ENCODE measurements at regions of chr15 and their contacts with region 1.

Region 1: DNA sequence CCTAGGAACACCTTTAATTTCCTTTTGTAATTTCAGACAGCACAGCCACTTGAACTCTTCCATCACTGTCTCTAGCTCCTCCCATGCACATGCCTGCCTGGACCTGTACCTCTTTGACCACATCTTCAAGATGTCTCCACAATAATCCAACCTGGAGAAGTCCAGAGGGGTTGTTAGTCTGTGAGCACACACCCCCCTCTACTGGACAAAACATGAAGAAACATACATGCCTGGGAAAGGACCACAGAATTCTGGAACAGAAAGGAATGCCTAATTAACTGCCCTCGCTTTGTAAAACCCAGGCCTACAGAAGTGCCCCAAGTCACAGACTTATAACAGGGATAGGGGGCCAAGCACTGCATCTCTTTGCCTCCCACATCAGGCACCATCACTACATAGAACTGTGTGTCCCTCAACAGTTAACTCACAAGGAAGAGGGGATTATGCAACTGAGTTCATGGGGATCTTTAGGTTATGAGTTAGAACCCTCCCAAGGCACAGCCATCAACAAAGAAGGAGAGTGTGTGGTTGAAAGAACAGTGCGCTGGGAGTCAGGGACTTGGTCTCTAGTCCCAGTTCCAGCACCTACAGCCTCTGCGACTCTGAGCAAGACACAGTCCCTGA is 61.7 kb downstream of the FMN1 start:
- DNase-seq: no peak
- H3K4me3 ChIP-seq: no peak overlapping the region
- CTCF ChIP-seq: peak; percentile 61

Region 2: GRCh38 chr15:33013827-33014445 is 118.9 kb before region 1 on chr15:
- CTCF ChIA-PET with region 1: interaction called, 76 read pairs
- POLR2A ChIA-PET with region 1: no interaction called
- DNase-seq: no peak
- H3K4me3 ChIP-seq: no peak overlapping the region
- CTCF ChIP-seq: no peak

Region 3: GRCh38 chr15:33031324-33031821 is 101.5 kb before region 1 on chr15:
- CTCF ChIA-PET with region 1: interaction called, 14 read pairs
- POLR2A ChIA-PET with region 1: no interaction called
- DNase-seq: no peak
- H3K4me3 ChIP-seq: no peak overlapping the region
- CTCF ChIP-seq: no peak

Region 4: GRCh38 chr15:33074942-33075341 is 57.9 kb before region 1 on chr15:
- CTCF ChIA-PET with region 1: interaction called, 813 read pairs
- POLR2A ChIA-PET with region 1: no interaction called
- DNase-seq: no peak
- H3K4me3 ChIP-seq: no peak overlapping the region
- CTCF ChIP-seq: no peak

Region 5: DNA sequence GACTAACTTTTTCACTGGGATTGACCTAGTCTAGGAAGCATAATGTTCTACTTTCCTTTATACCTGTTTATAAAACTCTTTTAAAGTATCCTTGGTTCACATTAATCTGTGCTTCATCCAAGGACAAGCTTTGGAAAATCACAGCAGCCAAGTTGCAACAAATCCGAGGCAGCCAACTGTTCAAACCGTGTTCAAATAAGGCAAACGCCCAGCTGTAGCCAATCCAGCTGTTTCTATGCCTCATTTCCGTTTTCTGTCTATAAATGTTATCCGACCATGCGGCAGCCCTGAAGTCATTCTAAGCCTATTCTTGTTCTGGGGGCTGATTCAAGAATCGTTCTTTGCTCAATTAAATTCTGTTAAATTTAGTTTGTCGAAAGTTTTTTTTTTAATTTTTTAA is 16.6 kb before region 1 on chr15:
- CTCF ChIA-PET with region 1: interaction called, 813 read pairs
- POLR2A ChIA-PET with region 1: no interaction called
- DNase-seq: no peak
- H3K4me3 ChIP-seq: no peak overlapping the region
- CTCF ChIP-seq: no peak

Region 6: DNA sequence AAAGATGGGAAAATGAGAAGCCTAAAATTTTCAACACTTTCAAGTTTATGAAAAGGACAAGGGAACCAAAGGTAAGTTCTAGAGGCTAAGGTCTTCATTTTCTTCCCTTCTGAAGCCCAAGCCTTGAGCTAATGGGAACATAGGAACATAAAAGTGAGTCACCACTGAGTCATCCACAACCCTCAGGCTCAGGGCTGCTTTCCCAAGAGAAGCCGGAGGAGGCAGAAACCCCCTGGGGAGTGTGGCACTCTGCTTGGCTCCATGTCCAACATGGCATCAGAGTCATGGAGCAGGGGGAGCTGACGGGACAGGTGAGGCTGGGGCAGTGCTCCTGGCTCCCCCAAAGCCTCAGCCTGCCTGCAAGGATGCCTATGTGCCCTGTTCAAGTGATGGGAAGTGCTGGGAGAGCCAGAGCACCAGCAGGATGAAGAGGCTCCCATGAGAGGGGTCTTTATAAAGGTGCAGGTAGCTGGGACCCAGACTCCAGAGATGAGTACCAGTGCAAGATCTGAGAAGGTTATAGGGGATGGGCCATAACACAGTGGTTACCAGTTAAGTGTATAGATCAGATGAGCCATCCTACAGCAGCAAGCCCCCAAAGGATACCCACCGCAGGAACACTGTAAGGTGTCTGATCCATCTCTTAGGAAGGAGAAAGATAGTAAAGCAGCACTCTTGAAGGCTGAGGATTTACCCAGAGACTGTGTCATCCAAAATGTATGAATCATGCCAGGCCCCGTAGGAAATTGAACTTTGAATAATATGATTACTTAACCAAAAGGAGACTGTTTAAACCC is 146.2 kb after region 1 on chr15:
- CTCF ChIA-PET with region 1: no interaction called
- POLR2A ChIA-PET with region 1: no interaction called
- DNase-seq: peak; percentile 52
- H3K4me3 ChIP-seq: no peak overlapping the region
- CTCF ChIP-seq: peak; percentile 27